ENCODE measurements at regions of chr5 and their contacts with region 1.

Region 1: DNA sequence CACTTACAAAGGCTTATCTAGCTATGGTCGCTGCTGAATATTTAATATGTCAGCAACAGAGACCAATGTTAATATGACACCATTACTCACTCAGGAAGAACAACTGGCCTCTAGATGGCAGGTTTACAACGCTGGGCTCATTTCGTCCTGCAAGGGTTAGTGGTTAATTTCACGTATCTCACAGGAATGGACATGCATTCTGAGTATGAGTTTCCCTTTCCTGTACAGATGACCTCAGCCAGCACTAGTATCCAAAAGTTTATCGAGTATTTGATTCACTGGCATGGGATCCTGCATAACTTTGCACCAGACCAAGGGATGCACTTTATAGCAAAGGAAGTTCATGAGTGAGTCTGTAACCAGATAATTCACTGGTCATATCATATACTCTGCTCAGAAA is 8.7 kb upstream of the TRPC7 start:
- DNase-seq: peak; percentile 22
- H3K4me3 ChIP-seq: no peak overlapping the region
- H3K27ac ChIP-seq: no peak overlapping the region
- H3K4me1 ChIP-seq: no peaks in the 10 kb centered on the region
- H3K27me3 ChIP-seq: peaks cover 36% of the 10 kb centered on the region
- CTCF ChIP-seq: peak; percentile 44

Region 2: DNA sequence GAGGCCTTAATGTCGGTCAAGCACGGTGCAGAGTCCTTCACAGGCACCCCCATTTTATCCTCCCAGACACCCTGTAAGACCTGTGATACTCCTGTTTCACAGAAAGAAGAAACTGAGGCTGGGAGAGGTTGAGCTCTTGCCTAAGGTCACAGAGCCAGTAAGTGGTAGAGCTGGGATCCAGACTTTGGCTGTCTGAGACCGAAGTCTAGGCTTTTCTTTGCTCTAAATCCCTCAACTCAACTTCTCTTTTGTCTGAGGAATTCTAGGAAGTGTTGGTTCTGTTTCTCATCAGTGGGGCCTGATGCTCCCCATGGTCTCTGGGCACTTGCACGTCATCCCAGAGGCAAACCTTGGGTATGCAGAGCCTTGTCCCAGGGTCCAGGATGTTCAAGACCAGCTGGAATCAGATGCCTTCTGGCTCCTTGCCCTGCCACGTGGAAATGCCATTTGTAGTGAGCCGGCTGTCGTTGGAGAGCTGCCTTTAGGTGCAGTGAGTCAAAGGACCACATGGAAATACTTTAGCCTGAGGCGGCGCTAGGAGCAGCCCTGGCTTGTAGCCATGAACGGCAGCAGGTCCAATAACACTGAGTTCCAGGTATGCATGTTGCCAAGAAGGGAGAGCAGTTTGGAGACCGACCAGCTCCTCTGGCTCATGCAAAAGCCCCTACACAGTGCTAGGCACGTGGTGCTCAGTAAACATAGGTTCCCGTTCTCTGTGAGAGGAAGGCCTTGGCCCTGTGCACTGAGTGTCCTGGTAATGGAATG is 936.0 kb before region 1 on chr5:
- CTCF ChIA-PET with region 1: no interaction called
- POLR2A ChIA-PET with region 1: no interaction called
- intact Hi-C with region 1: no loop called
- DNase-seq: no peak
- H3K4me3 ChIP-seq: no peak overlapping the region
- H3K27ac ChIP-seq: no peak overlapping the region
- H3K4me1 ChIP-seq: no peaks in the 10 kb centered on the region
- H3K27me3 ChIP-seq: peaks cover 5% of the 10 kb centered on the region
- CTCF ChIP-seq: no peak

Region 3: GRCh38 chr5:136699651-136700050 is 325.6 kb after region 1 on chr5:
- CTCF ChIA-PET with region 1: no interaction called
- POLR2A ChIA-PET with region 1: no interaction called
- intact Hi-C with region 1: loop called (anchors 10 kb)
- DNase-seq: no peak
- H3K4me3 ChIP-seq: no peak overlapping the region
- H3K27ac ChIP-seq: no peak overlapping the region
- H3K4me1 ChIP-seq: no peaks in the 10 kb centered on the region
- H3K27me3 ChIP-seq: peaks cover 86% of the 10 kb centered on the region
- CTCF ChIP-seq: no peak

Region 4: GRCh38 chr5:136769900-136770684 is 396.1 kb after region 1 on chr5:
- CTCF ChIA-PET with region 1: no interaction called
- POLR2A ChIA-PET with region 1: no interaction called
- intact Hi-C with region 1: loop called (anchors 5 kb)
- DNase-seq: peak; percentile 73
- H3K4me3 ChIP-seq: no peak overlapping the region
- H3K27ac ChIP-seq: no peak overlapping the region
- H3K4me1 ChIP-seq: no peaks in the 10 kb centered on the region
- H3K27me3 ChIP-seq: peaks cover 30% of the 10 kb centered on the region
- CTCF ChIP-seq: peak; percentile 87

Measured in A673 (cell line).